Dendritic cell treated with granulocyte-macrophage colony-stimulating factor and Interleukin-4, amounts not matched to agents 40 ng/mL and 50 ng/mL, for 4 days (primary cell): ENCODE measurements at regions of chr1 and their contacts with region 1.

Region 1: GRCh38 chr1:247857069-247857984 is at the start of gene TRIM58:
- H3K4me3 Mint-ChIP-seq: peak within 1 kb of the TSS; percentile 94
- H3K27ac Mint-ChIP-seq: peak within 1 kb of the TSS; percentile 54
- H3K4me1 Mint-ChIP-seq: peaks cover 30% of the 10 kb centered on the region
- H3K27me3 Mint-ChIP-seq: peaks cover 28% of the 10 kb centered on the region

Region 2: GRCh38 chr1:247681288-247681897 is 175.9 kb before region 1 on chr1:
- intact Hi-C with region 1: loop called (anchors 10 kb)
- H3K4me3 Mint-ChIP-seq: no peak overlapping the region
- H3K27ac Mint-ChIP-seq: no peak overlapping the region
- H3K4me1 Mint-ChIP-seq: no peaks in the 10 kb centered on the region
- H3K27me3 Mint-ChIP-seq: no peaks in the 10 kb centered on the region